ENCODE measurements at regions of chr9 and their contacts with region 1.

Region 1: GRCh38 chr9:20441711-20442423 is 180.4 kb downstream of the MLLT3 start:
- DNase-seq: no peak
- H3K4me3 Mint-ChIP-seq: no peak overlapping the region
- H3K27ac Mint-ChIP-seq: peak overlapping the region; percentile 24
- H3K4me1 Mint-ChIP-seq: peaks cover 36% of the 10 kb centered on the region
- H3K27me3 Mint-ChIP-seq: no peaks in the 10 kb centered on the region

Region 2: GRCh38 chr9:20376731-20377375 is 65.0 kb before region 1 on chr9:
- intact Hi-C with region 1: loop called (anchors 5 kb)
- DNase-seq: no peak
- H3K4me3 Mint-ChIP-seq: no peak overlapping the region
- H3K27ac Mint-ChIP-seq: no peak overlapping the region
- H3K4me1 Mint-ChIP-seq: peaks cover 17% of the 10 kb centered on the region
- H3K27me3 Mint-ChIP-seq: no peaks in the 10 kb centered on the region

Region 3: DNA sequence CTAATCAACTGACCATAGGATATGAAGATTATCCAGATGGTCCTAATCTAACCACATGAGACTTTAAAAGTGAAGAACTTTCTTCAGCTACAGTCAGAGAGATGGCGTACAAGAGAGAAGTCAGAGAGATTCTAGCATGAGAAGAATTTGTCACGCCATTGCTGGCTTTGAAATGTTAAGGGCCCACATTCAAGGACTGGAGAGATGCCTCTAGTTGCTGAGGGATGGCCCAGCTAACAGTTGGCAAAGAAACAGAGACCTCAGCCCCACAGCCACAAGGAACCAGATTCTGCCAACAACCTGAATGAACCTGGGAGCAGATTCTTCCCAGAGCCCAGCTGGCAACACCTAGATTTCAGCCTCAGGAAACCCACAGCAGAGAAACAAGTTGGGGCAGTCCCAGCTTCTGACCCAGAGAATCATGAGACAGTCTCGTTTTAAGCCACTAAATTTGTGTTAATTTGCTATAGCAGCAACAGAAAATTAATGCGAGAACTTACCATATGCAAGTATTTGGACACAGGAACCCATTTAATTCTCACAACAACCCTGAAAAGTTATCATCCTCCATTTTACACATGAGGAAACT is 48.5 kb after region 1 on chr9:
- intact Hi-C with region 1: no loop called
- DNase-seq: no peak
- H3K4me3 Mint-ChIP-seq: no peak overlapping the region
- H3K27ac Mint-ChIP-seq: no peak overlapping the region
- H3K4me1 Mint-ChIP-seq: peaks cover 1% of the 10 kb centered on the region
- H3K27me3 Mint-ChIP-seq: no peaks in the 10 kb centered on the region

Region 4: DNA sequence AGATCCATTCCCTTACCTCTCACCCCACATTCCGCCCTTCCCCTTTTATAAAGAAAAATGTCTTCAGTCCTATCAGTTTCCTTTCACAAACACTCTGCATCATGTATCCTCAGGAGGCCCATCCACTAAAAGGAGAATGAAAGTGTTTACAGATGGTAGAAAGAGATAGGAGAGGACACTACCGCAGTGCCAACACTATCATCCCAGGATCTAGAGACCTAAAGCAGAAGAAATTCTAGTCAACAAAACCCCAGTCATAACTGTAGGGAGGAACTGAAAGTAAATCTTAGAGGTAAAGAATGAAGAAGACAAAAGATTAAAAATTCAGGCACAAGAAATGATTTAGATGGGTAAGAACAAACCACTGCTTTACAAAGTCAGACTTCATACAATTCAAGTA is 66.4 kb after region 1 on chr9:
- intact Hi-C with region 1: loop called (anchors 5 kb)
- DNase-seq: peak; percentile 43
- H3K4me3 Mint-ChIP-seq: no peak overlapping the region
- H3K27ac Mint-ChIP-seq: peak overlapping the region; percentile 3
- H3K4me1 Mint-ChIP-seq: peaks cover 74% of the 10 kb centered on the region
- H3K27me3 Mint-ChIP-seq: no peaks in the 10 kb centered on the region